PC-3 (cell line): ENCODE measurements at regions of chr15 and their contacts with region 1.

Region 1: DNA sequence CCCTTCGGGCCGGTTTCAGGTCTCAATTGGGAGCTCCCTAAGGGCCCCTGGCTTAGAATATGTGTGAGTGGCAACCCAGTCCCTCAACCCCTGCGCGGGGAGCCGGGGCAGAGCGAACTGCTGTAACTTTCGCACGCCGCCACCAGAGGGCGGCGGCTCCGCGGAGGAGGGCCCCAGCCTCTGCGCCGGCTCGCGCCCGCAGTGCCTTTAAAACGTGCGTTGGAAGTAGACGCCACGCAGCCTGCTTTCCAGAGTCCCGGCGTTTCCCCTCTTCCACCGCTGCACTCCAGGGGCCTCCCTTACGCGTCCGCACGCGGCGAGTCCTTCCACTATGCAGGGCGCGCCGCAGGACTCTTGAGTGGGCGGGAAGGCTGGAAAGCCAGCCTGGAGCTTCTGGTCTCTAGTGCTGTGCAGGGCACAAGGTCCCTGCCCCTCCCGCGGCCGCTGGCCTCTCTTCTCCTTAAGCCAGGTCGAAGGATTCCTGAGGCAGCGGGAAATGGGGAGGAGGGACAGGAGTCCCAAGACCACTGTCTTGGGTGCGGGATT is 23.7 kb upstream of the RNU6-1 start:
- DNase-seq: peak; percentile 74
- ATAC-seq: peak; percentile 84
- H3K4me3 ChIP-seq: peak overlapping the region; percentile 73
- H3K27ac ChIP-seq: no peak overlapping the region
- H3K4me1 ChIP-seq: peaks cover 18% of the 10 kb centered on the region
- H3K27me3 ChIP-seq: no peaks in the 10 kb centered on the region
- CTCF ChIP-seq: peak; percentile 82

Region 2: GRCh38 chr15:67914537-67915460 is 51.3 kb after region 1 on chr15:
- CTCF ChIA-PET with region 1: interaction called, 3 read pairs
- POLR2A ChIA-PET with region 1: no interaction called
- intact Hi-C with region 1: loop called (anchors 1 kb)
- DNase-seq: peak; percentile 4
- ATAC-seq: peak; percentile 41
- H3K4me3 ChIP-seq: peak overlapping the region; percentile 33; the same call in 1 of the 2 replicates
- H3K27ac ChIP-seq: peak overlapping the region; percentile 53
- H3K4me1 ChIP-seq: peaks cover 28% of the 10 kb centered on the region
- H3K27me3 ChIP-seq: no peaks in the 10 kb centered on the region
- CTCF ChIP-seq: no peak